Ovary (tissue), 10 donors: ENCODE measurements at regions of chr2 and their contacts with region 1.

Region 1: GRCh38 chr2:100992262-100992661 is 9.8 kb upstream of the RPL31 start:
- DNase-seq: no peak
- H3K4me3 ChIP-seq: no peak overlapping the region
- H3K27ac ChIP-seq: no peak overlapping the region
- H3K4me1 ChIP-seq: no peaks in the 10 kb centered on the region
- H3K27me3 ChIP-seq: no peaks in the 10 kb centered on the region
- CTCF ChIP-seq: no peak
- EP300 ChIP-seq: no peak
- POLR2A ChIP-seq: no peak

Region 2: DNA sequence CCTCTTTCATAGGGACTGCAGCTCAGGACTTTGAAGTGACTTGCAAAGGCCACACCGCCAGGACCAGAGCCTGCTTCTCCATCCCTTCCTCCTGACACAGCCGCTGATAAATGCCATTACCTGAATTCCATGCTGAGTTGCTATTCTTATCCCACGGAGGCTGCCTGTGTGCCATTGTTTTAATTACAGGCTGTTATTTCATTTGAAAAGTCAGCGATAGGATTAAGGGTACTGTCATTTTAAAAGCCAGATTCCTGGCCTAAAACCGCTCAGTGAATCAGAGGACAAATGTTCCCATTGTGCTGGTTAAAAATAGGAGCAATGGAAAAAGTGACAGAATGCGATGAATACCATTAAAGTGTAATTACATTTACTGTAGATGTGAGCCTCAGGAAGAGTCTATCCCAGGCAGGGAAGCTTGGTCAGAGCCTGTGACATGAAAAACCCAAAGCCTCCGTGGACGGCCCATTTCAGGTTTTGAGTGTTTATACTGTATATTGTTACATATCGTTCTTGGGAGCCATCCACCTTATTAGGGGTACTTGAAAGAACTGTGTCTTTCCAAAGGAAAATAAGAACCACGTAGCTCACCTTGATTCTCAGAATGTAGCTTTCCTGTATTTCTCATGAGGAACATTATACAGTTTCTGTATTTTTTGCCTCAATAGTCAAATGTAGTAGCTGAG is 388.2 kb before region 1 on chr2:
- intact Hi-C with region 1: loop called in 1 of 4 experiments (anchors 5 kb)
- DNase-seq: no peak
- H3K4me3 ChIP-seq: no peak overlapping the region
- H3K27ac ChIP-seq: no peak overlapping the region
- H3K4me1 ChIP-seq: no peaks in the 10 kb centered on the region
- H3K27me3 ChIP-seq: no peaks in the 10 kb centered on the region
- CTCF ChIP-seq: no peak
- EP300 ChIP-seq: no peak
- POLR2A ChIP-seq: no peak